CD4-positive, alpha-beta memory T cell (primary cell): ENCODE measurements at regions of chr11 and their contacts with region 1.

Region 1: GRCh38 chr11:6757373-6757967 is 14.3 kb downstream of the OR2AG2 start:
- DNase-seq: peak; percentile 55 to 62 (median 60)
- H3K4me3 ChIP-seq: no peak overlapping the region
- H3K4me3 Mint-ChIP-seq: no peak overlapping the region
- H3K27ac ChIP-seq: no peak overlapping the region
- H3K27ac Mint-ChIP-seq: no peak overlapping the region
- H3K4me1 ChIP-seq: peaks cover 6% of the 10 kb centered on the region
- H3K4me1 Mint-ChIP-seq: peaks cover 0 to 11% (median 8%) of the 10 kb centered on the region in 4 donors
- H3K27me3 ChIP-seq: no peaks in the 10 kb centered on the region
- H3K27me3 Mint-ChIP-seq: peaks cover 2 to 4% of the 10 kb centered on the region in 2 donors

Region 2: DNA sequence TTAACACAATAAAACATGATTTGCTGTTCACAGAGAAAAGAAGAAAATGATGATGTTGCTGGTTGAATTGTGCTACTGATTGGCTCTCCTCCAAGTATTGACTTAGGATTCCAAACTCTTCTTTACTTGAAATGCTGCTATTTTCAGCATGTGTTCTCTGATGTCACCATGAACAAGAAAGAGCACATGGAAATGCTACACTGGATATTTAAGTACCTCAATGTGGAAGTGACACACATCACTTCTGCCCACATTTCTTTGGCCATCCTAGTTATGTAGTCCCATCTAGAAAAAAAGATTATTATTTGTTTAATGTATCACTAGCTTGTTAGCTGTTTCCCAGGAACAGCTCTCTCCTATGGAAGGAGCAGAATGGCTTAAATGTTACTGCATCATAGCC is 614.5 kb before region 1 on chr11:
- CTCF ChIA-PET with region 1: no interaction called
- POLR2A ChIA-PET with region 1: no interaction called
- intact Hi-C with region 1: no loop called
- DNase-seq: no peak
- H3K4me3 ChIP-seq: no peak overlapping the region
- H3K4me3 Mint-ChIP-seq: no peak overlapping the region
- H3K27ac ChIP-seq: no peak overlapping the region
- H3K27ac Mint-ChIP-seq: no peak overlapping the region
- H3K4me1 ChIP-seq: no peaks in the 10 kb centered on the region
- H3K4me1 Mint-ChIP-seq: no peaks in the 10 kb centered on the region
- H3K27me3 ChIP-seq: peaks cover 3% of the 10 kb centered on the region
- H3K27me3 Mint-ChIP-seq: peaks cover 10 to 11% of the 10 kb centered on the region in 2 donors

Region 3: DNA sequence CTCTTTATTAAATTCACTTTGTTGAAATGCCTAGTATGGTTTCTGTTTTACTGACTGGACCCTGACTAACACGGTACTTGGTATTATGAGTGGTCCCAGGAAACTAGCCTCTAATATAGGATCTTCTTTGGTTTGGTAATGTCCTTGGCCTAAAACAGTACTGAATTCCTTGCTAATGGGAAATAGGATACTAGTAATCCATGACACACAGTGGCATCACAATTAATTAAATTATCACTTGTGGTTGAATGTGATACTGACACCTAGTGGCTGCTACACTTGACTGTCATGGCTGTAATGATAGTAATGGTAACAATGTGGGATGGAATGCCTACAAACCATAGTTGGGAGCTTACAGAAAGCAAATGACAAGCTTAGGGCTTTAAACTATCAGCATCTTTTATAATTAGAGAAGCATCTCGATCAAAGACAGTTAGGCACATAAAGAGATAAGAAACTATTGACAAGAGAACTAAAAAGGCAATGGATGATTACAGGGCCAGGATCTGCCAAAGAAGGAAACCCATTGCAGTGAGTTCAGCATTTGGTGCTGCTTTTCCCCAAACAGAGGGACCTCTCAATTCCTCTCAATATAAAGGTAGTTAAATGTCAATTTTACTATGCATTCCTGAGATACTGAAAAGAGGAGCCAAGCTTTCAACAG is 251.8 kb before region 1 on chr11:
- CTCF ChIA-PET with region 1: interaction called, 14 read pairs
- POLR2A ChIA-PET with region 1: no interaction called
- intact Hi-C with region 1: no loop called
- DNase-seq: peak; percentile 17 to 41 (median 27)
- H3K4me3 ChIP-seq: no peak overlapping the region
- H3K4me3 Mint-ChIP-seq: no peak overlapping the region
- H3K27ac ChIP-seq: no peak overlapping the region
- H3K27ac Mint-ChIP-seq: no peak overlapping the region
- H3K4me1 ChIP-seq: no peaks in the 10 kb centered on the region
- H3K4me1 Mint-ChIP-seq: peaks cover 0 to 5% (median 0%) of the 10 kb centered on the region in 4 donors
- H3K27me3 ChIP-seq: no peaks in the 10 kb centered on the region
- H3K27me3 Mint-ChIP-seq: no peaks in the 10 kb centered on the region

Region 4: GRCh38 chr11:6603287-6604080 is 154.0 kb before region 1 on chr11 and contains the starts of genes ILK and RRP8:
- CTCF ChIA-PET with region 1: interaction called, 7 read pairs
- POLR2A ChIA-PET with region 1: no interaction called
- intact Hi-C with region 1: loop called (anchors 1 kb)
- DNase-seq: peak; percentile 82 to 86 (median 85)
- H3K4me3 ChIP-seq: peak within 1 kb of the TSS; percentile 94 to 96
- H3K4me3 Mint-ChIP-seq: no peak within 1 kb of the TSS
- H3K27ac ChIP-seq: peak within 1 kb of the TSS; percentile 85
- H3K27ac Mint-ChIP-seq: no peak within 1 kb of the TSS
- H3K4me1 ChIP-seq: peaks cover 62% of the 10 kb centered on the region
- H3K4me1 Mint-ChIP-seq: peaks cover 10 to 34% (median 20%) of the 10 kb centered on the region in 4 donors
- H3K27me3 ChIP-seq: no peaks in the 10 kb centered on the region
- H3K27me3 Mint-ChIP-seq: no peaks in the 10 kb centered on the region
- total RNA-seq, gene ILK: 131 to 132 TPM
- total RNA-seq, gene RRP8: 29.9 to 36.0 TPM

Region 5: GRCh38 chr11:6705905-6706535 is 51.5 kb before region 1 on chr11:
- CTCF ChIA-PET with region 1: interaction called, 124 read pairs
- POLR2A ChIA-PET with region 1: interaction called, 3 read pairs
- intact Hi-C with region 1: loop called (anchors 1 kb)
- DNase-seq: peak; percentile 38 to 52 (median 46)
- H3K4me3 ChIP-seq: no peak overlapping the region
- H3K4me3 Mint-ChIP-seq: no peak overlapping the region
- H3K27ac ChIP-seq: no peak overlapping the region
- H3K27ac Mint-ChIP-seq: peak overlapping the region; percentile 4 to 84 (median 43)
- H3K4me1 ChIP-seq: no peaks in the 10 kb centered on the region
- H3K4me1 Mint-ChIP-seq: peaks cover 9 to 25% (median 18%) of the 10 kb centered on the region in 4 donors
- H3K27me3 ChIP-seq: no peaks in the 10 kb centered on the region
- H3K27me3 Mint-ChIP-seq: no peaks in the 10 kb centered on the region

Region 6: DNA sequence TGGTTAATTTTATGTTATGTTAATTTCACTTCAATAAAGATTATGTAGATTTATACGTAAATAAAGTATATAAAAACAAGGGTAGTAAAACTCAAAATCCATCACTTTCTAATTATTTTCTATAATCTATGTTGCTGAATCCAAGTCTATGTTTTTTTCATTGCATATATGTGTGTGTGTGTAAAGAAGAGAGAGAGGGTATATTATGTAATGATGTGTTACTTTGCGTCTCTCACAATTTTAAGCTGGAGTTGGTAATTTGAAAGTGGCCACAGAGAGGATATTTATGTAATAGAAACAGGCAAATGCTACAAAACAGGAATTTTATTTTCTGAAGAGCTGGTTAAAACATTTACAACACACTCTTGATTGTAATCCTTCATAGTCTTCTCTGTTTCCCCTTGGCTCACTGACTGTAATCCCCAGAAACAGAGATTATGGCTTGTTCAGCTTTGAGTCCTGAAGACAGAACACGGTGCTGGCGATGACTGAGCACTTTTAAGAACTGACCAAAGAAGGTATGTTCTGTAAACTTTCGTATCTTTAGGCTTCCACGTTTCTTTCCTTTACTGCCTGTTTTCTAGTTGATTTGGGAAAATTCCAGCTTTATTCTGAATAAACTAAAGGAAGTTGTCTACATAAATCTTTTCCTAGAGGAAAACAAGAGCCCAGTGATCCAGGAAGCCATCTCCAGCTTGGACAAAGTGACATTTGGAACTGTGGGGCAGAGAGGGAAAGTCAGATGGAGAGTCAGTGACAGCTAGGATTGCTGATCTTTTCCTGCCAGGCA is 29.3 kb before region 1 on chr11:
- CTCF ChIA-PET with region 1: interaction called, 730 read pairs
- POLR2A ChIA-PET with region 1: interaction called, 4 read pairs
- intact Hi-C with region 1: no loop called
- DNase-seq: no peak
- H3K4me3 ChIP-seq: no peak overlapping the region
- H3K4me3 Mint-ChIP-seq: peak overlapping the region in 4 of 8 donors; percentile 38 to 57 (median 43)
- H3K27ac ChIP-seq: no peak overlapping the region
- H3K27ac Mint-ChIP-seq: peak overlapping the region; percentile 33 to 93 (median 74)
- H3K4me1 ChIP-seq: peaks cover 70% of the 10 kb centered on the region
- H3K4me1 Mint-ChIP-seq: peaks cover 50 to 93% (median 71%) of the 10 kb centered on the region in 4 donors
- H3K27me3 ChIP-seq: no peaks in the 10 kb centered on the region
- H3K27me3 Mint-ChIP-seq: no peaks in the 10 kb centered on the region

Region 7: DNA sequence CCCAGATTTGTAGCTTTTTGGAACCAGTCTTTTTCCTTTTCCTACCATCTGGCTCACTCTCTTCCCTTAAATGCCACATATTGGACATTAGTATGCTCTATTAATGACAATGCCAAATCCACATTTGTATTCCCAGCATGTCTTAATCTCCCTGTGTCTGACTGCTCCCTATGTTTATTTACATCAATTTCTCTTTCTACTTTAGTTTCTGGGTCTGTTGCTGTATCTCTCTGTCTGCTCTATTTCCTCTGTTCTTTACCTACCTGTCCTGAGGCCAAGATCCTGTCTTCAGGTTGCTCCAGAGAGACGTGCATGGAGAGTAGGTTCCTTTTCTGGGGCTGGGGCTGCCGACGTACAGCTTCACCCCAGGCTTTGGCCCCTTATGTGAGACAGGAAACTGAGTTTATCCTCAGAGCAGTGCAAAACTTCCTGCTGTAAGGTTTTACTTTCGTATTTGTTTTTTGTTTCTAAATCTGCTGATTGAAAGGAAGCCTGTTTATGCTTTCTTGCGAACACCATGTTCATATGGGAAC is 11.3 kb before region 1 on chr11:
- CTCF ChIA-PET with region 1: interaction called, 730 read pairs
- POLR2A ChIA-PET with region 1: interaction called, 31 read pairs
- intact Hi-C with region 1: loop called (anchors 1 kb)
- DNase-seq: peak; percentile 56 to 64 (median 61)
- H3K4me3 ChIP-seq: peak overlapping the region; percentile 60 to 75
- H3K4me3 Mint-ChIP-seq: no peak overlapping the region
- H3K27ac ChIP-seq: peak overlapping the region; percentile 79
- H3K27ac Mint-ChIP-seq: no peak overlapping the region
- H3K4me1 ChIP-seq: peaks cover 49% of the 10 kb centered on the region
- H3K4me1 Mint-ChIP-seq: peaks cover 31 to 39% (median 34%) of the 10 kb centered on the region in 4 donors
- H3K27me3 ChIP-seq: no peaks in the 10 kb centered on the region
- H3K27me3 Mint-ChIP-seq: no peaks in the 10 kb centered on the region